Activated CD8-positive, alpha-beta T cell treated with anti-CD3 and anti-CD28 coated beads, Interleukin-2, amount 10 ng/mL, durations not matched to agents 7 days and 5 days (primary cell): ENCODE measurements at regions of chr14 and their contacts with region 1.

Region 1: GRCh38 chr14:22986508-22987054 is 4.2 kb upstream of the AJUBA start:
- DNase-seq: peak; percentile 93
- ATAC-seq: peak; percentile 50
- H3K4me3 Mint-ChIP-seq: no peak overlapping the region
- H3K27ac Mint-ChIP-seq: no peak overlapping the region
- H3K4me1 Mint-ChIP-seq: no peaks in the 10 kb centered on the region
- H3K27me3 Mint-ChIP-seq: no peaks in the 10 kb centered on the region

Region 2: DNA sequence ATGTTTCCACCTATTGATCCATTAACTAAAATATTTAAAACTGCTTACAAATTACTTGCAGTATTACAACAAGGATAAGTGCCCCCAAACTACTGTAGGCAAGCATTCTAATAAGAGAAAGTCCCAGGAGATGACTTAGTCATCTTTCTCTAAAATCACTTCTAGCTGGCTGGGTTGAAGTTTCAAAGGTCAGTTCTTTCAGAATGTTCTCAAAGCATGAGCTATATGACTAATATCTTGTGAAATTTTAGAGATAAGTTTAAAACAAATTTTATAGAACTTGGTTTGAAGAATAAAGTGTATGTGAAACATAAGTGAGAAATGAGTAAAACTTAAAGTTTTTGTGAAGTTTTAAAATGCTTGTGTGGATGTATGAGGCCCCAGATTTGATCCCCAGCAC is 318.2 kb before region 1 on chr14:
- CTCF ChIA-PET with region 1: no interaction called
- POLR2A ChIA-PET with region 1: no interaction called
- DNase-seq: no peak
- ATAC-seq: no peak
- H3K4me3 Mint-ChIP-seq: no peak overlapping the region
- H3K27ac Mint-ChIP-seq: no peak overlapping the region
- H3K4me1 Mint-ChIP-seq: peaks cover 4% of the 10 kb centered on the region
- H3K27me3 Mint-ChIP-seq: peaks cover 10% of the 10 kb centered on the region

Region 3: DNA sequence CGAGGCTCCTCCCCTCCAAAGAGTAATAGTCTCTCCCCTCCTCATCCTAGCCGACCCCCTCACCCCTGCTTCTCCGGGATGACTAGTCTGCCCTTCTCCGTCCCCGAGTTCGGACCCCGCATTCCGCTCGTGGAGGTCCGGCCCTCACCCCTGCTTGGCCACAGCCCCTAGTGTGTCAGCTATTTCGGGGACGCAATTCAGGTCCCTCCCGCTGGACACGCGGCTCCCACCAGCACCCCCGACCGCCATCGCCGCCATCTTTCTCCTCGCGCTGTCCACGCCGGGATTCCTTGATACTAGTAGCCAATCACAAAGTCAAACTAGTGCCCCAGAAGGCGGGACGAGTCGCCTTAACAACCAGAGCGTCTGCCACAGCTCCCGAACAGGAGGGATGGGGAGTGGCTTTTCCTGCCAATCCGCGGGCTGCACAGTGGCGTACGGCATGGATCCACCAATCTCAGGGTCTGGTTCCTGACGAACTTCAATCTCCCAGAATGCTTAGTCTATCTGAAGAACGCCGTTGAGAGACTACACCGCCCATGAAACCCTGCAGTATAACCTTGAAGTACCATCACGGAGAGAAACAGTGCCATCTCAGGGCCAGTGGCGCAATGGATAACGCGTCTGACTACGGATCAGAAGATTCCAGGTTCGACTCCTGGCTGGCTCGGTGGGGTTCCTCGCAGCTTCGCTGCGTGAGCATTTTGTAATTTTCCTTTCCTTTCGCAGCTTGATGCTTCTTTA is 57.3 kb before region 1 on chr14 and contains the start of gene PRMT5:
- CTCF ChIA-PET with region 1: interaction called, 50 read pairs
- POLR2A ChIA-PET with region 1: no interaction called
- DNase-seq: peak; percentile 98
- ATAC-seq: peak; percentile 98
- H3K4me3 Mint-ChIP-seq: no peak within 1 kb of the TSS
- H3K27ac Mint-ChIP-seq: no peak within 1 kb of the TSS
- H3K4me1 Mint-ChIP-seq: peaks cover 27% of the 10 kb centered on the region
- H3K27me3 Mint-ChIP-seq: no peaks in the 10 kb centered on the region
- total RNA-seq, gene PRMT5: 55.5 to 64.9 TPM

Region 4: DNA sequence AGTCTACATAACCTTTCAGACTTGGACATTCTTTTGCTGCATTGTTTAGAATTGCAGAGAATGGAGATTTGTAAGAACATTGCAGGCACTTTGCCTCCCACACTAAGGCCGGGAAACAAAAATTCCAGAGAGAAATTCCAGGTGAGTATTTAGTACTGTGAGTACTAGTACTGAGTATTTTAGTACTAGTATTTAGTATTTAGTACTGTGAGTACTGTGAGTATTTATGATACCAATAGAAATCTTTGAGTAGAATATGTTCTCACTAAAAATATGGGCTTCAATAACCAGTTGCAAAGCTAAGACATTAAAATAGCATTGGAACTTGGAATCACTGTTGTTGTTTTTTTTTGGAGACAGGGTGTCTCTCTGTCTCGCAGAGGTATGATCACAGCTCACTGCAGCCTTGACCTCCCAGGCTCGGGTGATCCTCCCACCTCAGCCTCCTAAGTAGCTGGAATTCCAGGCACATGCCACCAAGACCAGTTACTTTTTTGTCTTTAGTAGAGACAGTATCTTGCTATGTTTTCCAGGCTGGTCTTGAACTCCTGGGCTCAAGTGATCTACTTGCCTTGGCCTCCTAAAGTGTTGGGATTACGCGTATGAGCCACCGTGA is 24.4 kb before region 1 on chr14:
- CTCF ChIA-PET with region 1: interaction called, 225 read pairs
- POLR2A ChIA-PET with region 1: interaction called, 3 read pairs
- DNase-seq: no peak
- ATAC-seq: no peak
- H3K4me3 Mint-ChIP-seq: no peak overlapping the region
- H3K27ac Mint-ChIP-seq: no peak overlapping the region
- H3K4me1 Mint-ChIP-seq: peaks cover 8% of the 10 kb centered on the region
- H3K27me3 Mint-ChIP-seq: peaks cover 5% of the 10 kb centered on the region

Region 5: GRCh38 chr14:23006544-23007419 is 20.2 kb after region 1 on chr14:
- CTCF ChIA-PET with region 1: interaction called, 121 read pairs
- POLR2A ChIA-PET with region 1: interaction called, 13 read pairs
- DNase-seq: peak; percentile 98
- ATAC-seq: peak; percentile 99
- H3K4me3 Mint-ChIP-seq: peak overlapping the region; percentile 94
- H3K27ac Mint-ChIP-seq: peak overlapping the region; percentile 98
- H3K4me1 Mint-ChIP-seq: peaks cover 51% of the 10 kb centered on the region
- H3K27me3 Mint-ChIP-seq: no peaks in the 10 kb centered on the region

Region 6: DNA sequence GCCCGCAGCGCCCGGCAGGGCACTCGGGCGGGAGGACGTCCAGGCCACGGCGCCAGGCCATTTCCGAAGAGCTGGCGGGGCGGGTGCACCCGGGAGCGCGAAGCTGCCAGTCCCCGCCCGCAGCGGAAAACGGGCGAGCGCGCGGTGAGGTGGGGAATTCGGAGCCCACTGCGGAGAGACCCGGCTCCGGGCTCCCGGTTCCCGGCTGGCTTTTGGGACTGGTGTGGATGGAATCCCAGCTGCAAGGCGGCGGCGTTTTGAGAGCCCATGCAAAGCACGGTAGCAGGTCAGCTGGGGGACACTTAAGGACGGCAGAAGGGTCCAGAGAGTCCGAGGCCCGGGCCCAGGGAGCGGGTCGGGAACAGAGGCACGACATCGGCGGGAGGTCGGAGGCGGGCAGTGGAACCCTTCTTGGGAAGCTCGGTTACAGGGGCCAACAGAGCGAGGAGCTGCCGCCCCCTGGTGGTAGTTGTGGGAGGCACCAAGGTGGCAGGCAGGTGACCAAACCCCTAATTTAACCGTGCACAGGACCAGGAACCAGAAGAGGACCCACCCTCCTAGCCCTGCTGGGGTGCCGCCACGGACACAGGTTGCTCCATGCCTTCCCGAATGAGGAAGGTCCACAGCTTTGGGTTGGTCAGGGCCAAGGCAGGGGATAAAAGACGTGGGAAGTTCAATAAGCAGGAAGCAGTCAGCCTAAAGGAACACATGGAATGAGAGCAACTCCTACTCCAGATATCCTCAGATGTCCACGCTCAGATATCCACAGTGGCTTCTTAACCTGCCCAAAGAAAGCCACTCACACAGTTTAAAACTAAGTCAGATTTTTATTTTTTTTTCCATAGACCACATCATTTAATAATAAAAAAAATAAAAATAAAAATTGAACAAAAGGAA is 71.4 kb after region 1 on chr14:
- CTCF ChIA-PET with region 1: interaction called, 489 read pairs
- POLR2A ChIA-PET with region 1: no interaction called
- DNase-seq: peak; percentile 91
- ATAC-seq: peak; percentile 76
- H3K4me3 Mint-ChIP-seq: peak overlapping the region; percentile 83
- H3K27ac Mint-ChIP-seq: peak overlapping the region; percentile 34
- H3K4me1 Mint-ChIP-seq: peaks cover 18% of the 10 kb centered on the region
- H3K27me3 Mint-ChIP-seq: peaks cover 9% of the 10 kb centered on the region

Region 7: DNA sequence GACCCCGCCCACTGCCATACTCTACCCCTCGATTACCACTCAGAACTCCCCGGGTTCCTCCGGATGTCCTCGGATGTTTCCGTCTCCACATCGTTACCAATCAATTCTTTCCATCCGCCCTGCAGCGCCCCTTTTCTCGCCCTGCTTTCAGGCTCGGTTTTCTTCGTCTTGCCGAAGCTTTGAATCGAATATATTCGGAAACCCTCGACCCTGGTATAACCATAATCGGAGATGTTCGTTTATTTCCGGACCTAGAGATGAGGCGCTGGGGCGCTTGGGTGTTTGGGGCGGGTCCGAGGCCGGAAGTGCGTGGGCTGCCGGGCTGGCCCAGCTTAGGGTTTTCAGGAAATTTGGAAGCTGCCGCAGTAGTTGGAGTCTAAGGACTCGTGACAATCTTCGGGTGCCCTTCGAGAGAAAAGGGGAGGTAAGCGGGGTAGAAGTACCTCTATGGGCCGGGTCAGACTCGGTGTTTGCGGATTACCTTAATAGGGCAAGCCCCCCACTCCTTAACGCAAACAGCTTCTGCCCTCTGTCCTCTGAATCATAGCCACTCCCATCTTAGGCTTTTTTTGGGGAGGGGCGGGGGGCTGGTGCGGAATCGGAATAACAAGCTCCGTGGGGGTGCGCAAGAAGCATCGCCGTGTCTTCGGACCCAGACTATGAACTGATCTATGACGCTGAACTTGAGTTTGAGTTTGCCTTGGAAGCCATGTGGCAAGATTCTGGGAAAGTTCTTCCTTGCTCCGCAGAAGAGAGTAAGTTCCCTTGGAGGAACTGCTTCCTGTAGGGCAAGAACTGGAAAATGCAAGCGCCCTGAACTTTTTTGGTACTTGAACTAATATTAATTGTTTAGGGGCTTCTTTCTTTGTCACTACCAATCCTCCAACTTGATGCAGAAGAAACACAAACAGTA is 108.9 kb after region 1 on chr14 and contains the start of gene C14orf119:
- CTCF ChIA-PET with region 1: interaction called, 16 read pairs
- POLR2A ChIA-PET with region 1: interaction called, 3 read pairs
- DNase-seq: peak; percentile 100
- ATAC-seq: peak; percentile 94
- H3K4me3 Mint-ChIP-seq: no peak within 1 kb of the TSS
- H3K27ac Mint-ChIP-seq: no peak within 1 kb of the TSS
- H3K4me1 Mint-ChIP-seq: peaks cover 33% of the 10 kb centered on the region
- H3K27me3 Mint-ChIP-seq: no peaks in the 10 kb centered on the region
- total RNA-seq, gene C14orf119: 46.0 to 47.0 TPM